Activated CD4-positive, alpha-beta memory T cell treated with anti-CD3 and anti-CD28 coated beads, Interleukin-2, amount 10 ng/mL, durations not matched to agents 7 days and 5 days (primary cell): ENCODE measurements at regions of chr5 and their contacts with region 1.

Region 1: GRCh38 chr5:110751902-110752762 is 13.3 kb downstream of the SLC25A46 start:
- DNase-seq: peak; percentile 52
- H3K4me3 Mint-ChIP-seq: peak overlapping the region; percentile 36
- H3K27ac Mint-ChIP-seq: peak overlapping the region; percentile 85
- H3K4me1 Mint-ChIP-seq: peaks cover 53% of the 10 kb centered on the region
- H3K27me3 Mint-ChIP-seq: no peaks in the 10 kb centered on the region

Region 2: DNA sequence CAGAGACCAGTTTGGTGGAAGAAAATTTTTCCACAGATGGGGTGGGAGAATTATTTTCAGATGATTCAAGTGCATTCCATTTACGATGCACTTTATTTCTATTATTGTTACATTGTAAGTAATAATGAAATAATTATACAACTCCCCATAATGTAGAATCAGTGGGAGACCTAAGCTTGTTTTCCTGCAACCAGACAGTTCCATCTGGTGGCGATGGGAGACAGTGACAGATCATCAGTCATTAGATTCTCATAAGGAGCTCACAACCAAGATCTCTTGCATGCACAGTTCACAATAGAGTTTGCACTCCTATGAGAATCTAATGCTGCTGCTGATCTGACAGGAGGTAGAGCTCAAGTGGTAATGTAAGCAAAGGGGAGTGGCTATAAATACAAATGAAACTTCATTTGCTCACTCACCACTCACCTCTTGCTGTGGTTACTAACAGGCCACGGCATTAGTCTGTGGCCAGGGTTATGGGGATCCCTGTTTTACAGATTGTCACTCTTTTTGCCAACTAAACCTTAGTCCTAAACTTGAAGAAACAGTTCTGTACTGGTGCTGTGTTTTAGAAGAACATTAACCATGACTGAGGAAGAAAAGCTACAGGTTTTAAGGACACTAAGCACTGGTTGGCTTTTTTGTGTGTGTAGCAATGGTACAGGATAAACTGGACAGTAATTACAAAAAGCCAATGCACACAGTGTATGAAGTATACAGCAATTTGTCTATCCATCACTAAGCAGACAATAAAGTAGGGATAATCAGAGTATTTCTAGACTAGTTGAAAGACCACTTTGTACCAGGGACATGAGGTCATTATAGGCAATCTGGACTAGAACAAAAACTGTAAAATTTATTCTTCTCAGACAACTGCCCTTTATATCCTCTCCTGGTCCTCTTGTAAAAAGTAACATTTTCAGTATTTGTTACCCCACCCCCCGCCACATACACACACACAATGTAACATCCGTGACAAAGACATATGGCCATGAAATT is 35.6 kb before region 1 on chr5:
- CTCF ChIA-PET with region 1: no interaction called
- POLR2A ChIA-PET with region 1: no interaction called
- DNase-seq: no peak
- H3K4me3 Mint-ChIP-seq: no peak overlapping the region
- H3K27ac Mint-ChIP-seq: no peak overlapping the region
- H3K4me1 Mint-ChIP-seq: peaks cover 7% of the 10 kb centered on the region
- H3K27me3 Mint-ChIP-seq: peaks cover 2% of the 10 kb centered on the region

Region 3: GRCh38 chr5:110738812-110739651 is 13.1 kb before region 1 on chr5 and contains the start of gene SLC25A46:
- CTCF ChIA-PET with region 1: interaction called, 9 read pairs
- POLR2A ChIA-PET with region 1: interaction called, 60 read pairs
- DNase-seq: peak; percentile 91
- H3K4me3 Mint-ChIP-seq: peak within 1 kb of the TSS; percentile 95
- H3K27ac Mint-ChIP-seq: peak within 1 kb of the TSS; percentile 81
- H3K4me1 Mint-ChIP-seq: peaks cover 37% of the 10 kb centered on the region
- H3K27me3 Mint-ChIP-seq: peaks cover 10% of the 10 kb centered on the region
- total RNA-seq, gene SLC25A46: 43.2 to 45.0 TPM